ENCODE measurements at regions of chr11 and their contacts with region 1.

Region 1: DNA sequence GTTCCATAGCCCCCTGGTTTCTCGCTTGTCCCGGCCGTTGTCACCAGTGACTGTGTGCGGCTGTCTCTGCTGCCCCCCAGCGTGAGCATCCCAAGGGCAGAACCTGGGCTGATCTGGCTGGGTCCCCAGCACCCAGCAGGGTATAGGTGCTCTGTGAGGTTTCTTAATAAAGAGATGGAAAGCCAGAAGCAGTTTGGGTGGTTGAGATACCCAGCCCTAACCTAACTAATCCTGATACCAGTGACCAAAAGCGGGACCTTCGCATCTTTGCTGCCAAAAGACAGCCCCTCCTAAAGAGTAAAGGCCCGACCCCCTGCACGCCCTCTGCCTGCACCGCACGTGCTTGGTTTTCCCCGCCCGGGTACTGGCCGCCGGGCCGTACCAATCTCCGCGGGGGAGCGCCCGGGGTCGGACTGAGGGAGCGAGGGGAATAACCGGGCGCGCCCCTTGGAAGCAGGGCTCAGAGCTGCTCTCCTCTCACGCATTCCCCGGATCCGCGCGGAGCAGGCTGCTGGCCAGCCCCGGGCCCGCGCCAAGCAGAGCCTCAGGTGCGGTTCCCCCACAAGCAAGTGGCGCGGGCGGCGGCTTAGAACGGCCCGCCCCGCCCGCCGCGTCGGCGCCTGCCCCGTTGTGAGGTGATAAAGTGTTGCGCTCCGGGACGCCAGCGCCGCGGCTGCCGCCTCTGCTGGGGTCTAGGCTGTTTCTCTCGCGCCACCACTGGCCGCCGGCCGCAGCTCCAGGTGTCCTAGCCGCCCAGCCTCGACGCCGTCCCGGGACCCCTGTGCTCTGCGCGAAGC is at the start of gene DGAT2:
- DNase-seq: peak; percentile 85 to 90 (median 90)
- ATAC-seq: peak; percentile 81 to 90 (median 86)
- H3K4me3 ChIP-seq: peak within 1 kb of the TSS; percentile 72 to 98 (median 87)
- H3K27ac ChIP-seq: peak within 1 kb of the TSS; percentile 81 to 99 (median 97)
- H3K4me1 ChIP-seq: peaks cover 0 to 24% (median 5%) of the 10 kb centered on the region in 4 donors
- H3K27me3 ChIP-seq: no peaks in the 10 kb centered on the region
- CTCF ChIP-seq: peak; percentile 44 to 65 (median 58)
- POLR2A ChIP-seq: peak; percentile 89
- total RNA-seq, gene DGAT2: 33.1 to 166 (median 124) TPM

Region 2: DNA sequence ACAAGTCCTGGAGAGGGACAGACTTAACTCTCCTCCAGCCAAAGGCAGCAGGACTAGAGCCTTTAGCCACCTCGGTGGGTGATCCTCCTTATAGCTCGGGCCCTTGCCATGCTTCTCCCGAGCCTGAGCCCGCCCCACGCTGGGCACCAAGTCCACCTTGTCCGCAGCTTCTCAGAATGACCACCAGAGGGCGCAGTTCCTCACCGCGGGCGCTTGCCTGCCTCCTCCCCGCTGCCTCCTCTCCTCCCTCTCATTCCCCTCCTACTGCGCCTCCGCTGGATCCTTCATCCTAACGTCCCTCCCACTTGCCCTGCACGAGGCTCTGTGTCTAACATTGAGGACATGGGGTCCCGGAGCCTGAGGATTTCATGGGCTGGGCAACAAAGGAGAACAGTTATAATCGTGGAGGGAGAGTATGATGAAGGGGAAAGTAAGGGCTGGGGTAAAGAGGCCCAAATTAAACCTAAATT is 62.0 kb before region 1 on chr11:
- intact Hi-C with region 1: loop called in 1 of 2 experiments (anchors 10 kb)
- DNase-seq: peak; percentile 72 to 84 (median 83)
- ATAC-seq: peak; percentile 99 to 100 (median 99)
- H3K4me3 ChIP-seq: no peak overlapping the region
- H3K27ac ChIP-seq: no peak overlapping the region
- H3K4me1 ChIP-seq: peaks cover 0 to 8% (median 3%) of the 10 kb centered on the region in 4 donors
- H3K27me3 ChIP-seq: no peaks in the 10 kb centered on the region
- CTCF ChIP-seq: peak; percentile 84 to 99 (median 98)
- POLR2A ChIP-seq: no peak

Region 3: GRCh38 chr11:75721855-75722668 is 46.2 kb before region 1 on chr11:
- intact Hi-C with region 1: loop called in 1 of 2 experiments (anchors 5 kb)
- DNase-seq: peak; percentile 68 to 87 (median 84)
- ATAC-seq: peak; percentile 51 to 67 (median 58)
- H3K4me3 ChIP-seq: peak overlapping the region in 2 of 3 donors; percentile 54 to 72
- H3K27ac ChIP-seq: peak overlapping the region; percentile 47 to 84 (median 80)
- H3K4me1 ChIP-seq: peaks cover 0 to 49% (median 14%) of the 10 kb centered on the region in 4 donors
- H3K27me3 ChIP-seq: no peaks in the 10 kb centered on the region
- CTCF ChIP-seq: no peak
- POLR2A ChIP-seq: peak; percentile 24